ENCODE measurements at regions of chr3 and their contacts with region 1.

Region 1: GRCh38 chr3:186821429-186822367 is 15.4 kb upstream of the RFC4 start:
- DNase-seq: no peak
- ATAC-seq: peak; percentile 52
- H3K4me3 ChIP-seq: no peak overlapping the region
- H3K27ac ChIP-seq: no peak overlapping the region
- H3K4me1 ChIP-seq: no peaks in the 10 kb centered on the region
- H3K27me3 ChIP-seq: peaks cover 5 to 18% of the 10 kb centered on the region in 2 experiments
- CTCF ChIP-seq: peak; percentile 50 to 69 (median 59)
- EP300 ChIP-seq: no peak
- POLR2A ChIP-seq: no peak
- RAD21 ChIP-seq: peak; percentile 75

Region 2: DNA sequence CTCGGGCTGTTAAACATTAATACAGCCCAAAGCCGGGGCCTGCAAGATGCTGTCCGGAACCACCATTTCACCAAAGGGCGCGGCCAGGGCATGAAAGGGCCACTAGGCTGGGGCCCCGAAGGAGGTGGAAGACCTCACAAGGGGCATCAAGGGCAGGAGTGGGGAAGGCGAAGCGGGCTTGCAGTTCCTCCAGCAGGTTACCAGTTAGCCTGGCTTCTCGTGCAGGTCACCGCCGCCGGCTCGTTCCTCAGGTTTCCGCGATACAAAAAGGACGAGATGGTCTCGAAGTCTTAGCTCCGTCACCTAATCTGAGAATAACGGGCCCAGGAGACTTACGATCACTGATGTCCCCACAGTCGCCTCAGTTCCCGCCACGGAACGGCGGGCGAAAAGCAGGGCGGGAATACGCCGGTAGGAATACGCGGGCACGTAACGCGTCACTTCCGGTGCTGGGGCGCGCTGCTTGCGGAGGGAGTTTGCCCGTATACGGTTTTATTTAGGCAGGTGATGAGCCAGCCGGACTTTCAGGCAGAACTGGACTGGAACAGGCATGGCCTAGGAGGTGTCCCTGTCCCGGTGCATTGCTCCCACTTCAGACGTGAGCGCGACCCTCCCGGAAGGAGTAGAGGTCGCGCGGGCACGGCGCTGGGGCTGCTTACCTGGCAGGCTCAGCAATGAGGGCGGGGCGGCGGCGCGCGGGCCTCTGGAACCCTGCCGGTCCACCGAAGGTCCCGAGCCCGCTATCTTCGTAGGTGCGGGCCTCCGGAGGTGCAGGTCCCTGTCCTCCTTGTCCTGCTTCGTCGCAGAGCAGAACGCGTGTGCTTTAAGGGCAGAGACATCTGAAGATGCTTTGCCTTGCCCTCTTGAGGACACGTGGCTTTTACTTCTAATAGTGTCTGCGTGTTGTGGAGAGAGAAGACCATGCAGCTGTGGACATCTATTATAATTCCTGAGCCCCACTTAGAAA is 15.3 kb before region 1 on chr3 and contains the start of gene RFC4:
- CTCF ChIA-PET with region 1: interaction called, 14 read pairs
- POLR2A ChIA-PET with region 1: no interaction called
- RAD21 ChIA-PET with region 1: no interaction called
- SMC1A ChIA-PET with region 1: interaction called, 4 read pairs
- in situ Hi-C with region 1: no loop called
- intact Hi-C with region 1: no loop called
- DNase-seq: no peak
- ATAC-seq: peak; percentile 91
- H3K4me3 ChIP-seq: peak within 1 kb of the TSS; percentile 78
- H3K27ac ChIP-seq: peak within 1 kb of the TSS; percentile 74
- H3K4me1 ChIP-seq: peaks cover 14% of the 10 kb centered on the region
- H3K27me3 ChIP-seq: no peaks in the 10 kb centered on the region
- CTCF ChIP-seq: no peak
- EP300 ChIP-seq: no peak
- POLR2A ChIP-seq: peak; percentile 81
- RAD21 ChIP-seq: no peak
- polyA plus RNA-seq, gene RFC4: 122 to 139 TPM